Activated CD4-positive, alpha-beta T cell treated with anti-CD3 and anti-CD28 coated beads for 36 hours (primary cell): ENCODE measurements at regions of chr19 and their contacts with region 1.

Region 1: DNA sequence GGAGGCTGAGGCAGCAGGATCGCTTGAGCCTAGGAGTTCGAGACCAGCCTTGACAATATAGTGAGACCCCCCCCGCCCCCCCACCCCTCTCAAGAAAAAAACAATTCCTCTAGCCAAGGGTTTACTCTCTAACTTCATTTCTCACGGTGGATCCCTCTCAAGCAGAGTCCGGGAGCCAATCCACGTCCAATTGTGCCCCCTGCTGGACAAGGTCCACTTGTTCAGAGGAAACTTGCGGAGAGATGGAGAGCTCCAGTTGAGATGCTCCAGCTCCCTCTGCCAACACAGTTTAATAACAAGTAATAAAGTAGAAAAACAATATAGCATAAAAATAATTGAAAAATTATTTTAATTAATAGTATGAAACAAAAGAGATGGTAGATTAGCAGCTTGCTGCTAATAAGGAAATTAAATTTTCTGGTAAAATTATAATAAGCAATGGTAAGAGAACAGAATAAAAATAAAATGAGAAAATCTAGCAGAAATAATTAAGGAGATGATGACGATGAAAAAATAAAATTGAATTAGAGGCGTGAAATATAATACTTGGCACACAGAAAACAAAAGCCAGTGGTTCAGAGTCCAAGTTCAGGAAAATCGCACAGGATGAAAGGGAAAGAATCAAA is 14.5 kb upstream of the SIGLEC14 start:
- DNase-seq: peak; percentile 86
- ATAC-seq: peak; percentile 66
- H3K4me3 Mint-ChIP-seq: no peak overlapping the region
- H3K27ac Mint-ChIP-seq: no peak overlapping the region
- H3K4me1 Mint-ChIP-seq: peaks cover 5% of the 10 kb centered on the region
- H3K27me3 Mint-ChIP-seq: peaks cover 28% of the 10 kb centered on the region

Region 2: DNA sequence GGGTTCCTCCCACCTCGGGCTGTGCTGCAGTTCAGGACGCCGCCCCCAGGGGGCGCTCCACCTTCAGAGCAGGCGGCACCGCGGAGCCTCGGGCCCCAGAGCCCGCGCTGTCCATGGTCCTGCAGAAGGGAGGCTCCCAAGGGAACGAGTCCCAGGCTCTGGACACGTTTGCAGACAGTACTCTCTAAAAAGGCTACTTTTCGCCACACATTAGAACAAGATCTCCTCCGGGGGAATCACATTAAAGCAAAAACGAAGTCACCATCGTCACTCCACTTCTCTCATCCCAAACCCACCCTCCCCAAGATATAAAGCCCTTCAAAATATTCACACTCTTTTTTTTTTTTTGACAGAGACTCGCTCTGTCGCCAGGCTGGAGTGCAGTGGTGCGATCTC is 239.0 kb before region 1 on chr19:
- CTCF ChIA-PET with region 1: interaction called, 17 read pairs
- POLR2A ChIA-PET with region 1: no interaction called
- intact Hi-C with region 1: loop called (anchors 1 kb)
- DNase-seq: peak; percentile 94
- ATAC-seq: peak; percentile 60
- H3K4me3 Mint-ChIP-seq: no peak overlapping the region
- H3K27ac Mint-ChIP-seq: no peak overlapping the region
- H3K4me1 Mint-ChIP-seq: peaks cover 24% of the 10 kb centered on the region
- H3K27me3 Mint-ChIP-seq: peaks cover 20% of the 10 kb centered on the region

Region 3: GRCh38 chr19:51514866-51515481 is 146.1 kb before region 1 on chr19:
- CTCF ChIA-PET with region 1: interaction called, 28 read pairs
- POLR2A ChIA-PET with region 1: no interaction called
- intact Hi-C with region 1: loop called (anchors 2 to 5 kb)
- DNase-seq: peak; percentile 41
- ATAC-seq: peak; percentile 73
- H3K4me3 Mint-ChIP-seq: no peak overlapping the region
- H3K27ac Mint-ChIP-seq: no peak overlapping the region
- H3K4me1 Mint-ChIP-seq: peaks cover 19% of the 10 kb centered on the region
- H3K27me3 Mint-ChIP-seq: peaks cover 17% of the 10 kb centered on the region

Region 4: DNA sequence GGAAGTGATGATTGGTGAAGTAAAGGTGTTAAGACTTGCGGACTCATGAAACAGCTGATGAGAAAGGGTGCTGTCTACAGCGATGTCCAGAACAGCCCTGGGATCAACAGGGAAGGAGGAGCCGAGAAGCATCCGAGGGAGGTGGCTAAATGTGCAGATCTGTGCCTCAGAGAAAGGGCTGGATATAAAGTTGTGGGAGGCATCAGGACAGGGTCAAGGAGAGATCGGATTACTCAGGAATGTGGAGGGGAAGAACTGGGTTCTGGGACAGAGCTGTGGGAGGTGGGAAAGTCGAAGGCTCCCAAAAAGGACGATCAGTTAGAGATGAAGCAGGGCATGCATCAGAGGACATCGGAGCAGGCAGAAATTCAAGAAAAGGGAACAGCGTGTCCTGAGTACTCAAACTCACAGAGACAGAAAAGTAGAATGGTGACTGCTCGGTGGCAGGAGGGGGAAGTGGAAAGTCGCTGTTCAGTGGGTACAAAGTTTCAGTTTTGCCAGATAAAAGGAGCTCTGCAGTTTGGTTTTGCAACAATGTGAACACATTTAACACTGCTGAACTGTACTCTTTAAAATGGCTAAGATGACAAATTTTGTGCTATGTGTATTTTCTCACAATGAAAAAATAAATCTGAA is 16.3 kb before region 1 on chr19:
- CTCF ChIA-PET with region 1: interaction called, 15 read pairs
- POLR2A ChIA-PET with region 1: interaction called, 9 read pairs
- intact Hi-C with region 1: no loop called
- DNase-seq: no peak
- ATAC-seq: no peak
- H3K4me3 Mint-ChIP-seq: no peak overlapping the region
- H3K27ac Mint-ChIP-seq: no peak overlapping the region
- H3K4me1 Mint-ChIP-seq: no peaks in the 10 kb centered on the region
- H3K27me3 Mint-ChIP-seq: peaks cover 37% of the 10 kb centered on the region

Region 5: GRCh38 chr19:51777570-51778462 is 116.7 kb after region 1 on chr19:
- CTCF ChIA-PET with region 1: interaction called, 5 read pairs
- POLR2A ChIA-PET with region 1: no interaction called
- intact Hi-C with region 1: loop called in 1 of 2 experiments (anchors 10 kb)
- DNase-seq: peak; percentile 66
- ATAC-seq: peak; percentile 74
- H3K4me3 Mint-ChIP-seq: no peak overlapping the region
- H3K27ac Mint-ChIP-seq: no peak overlapping the region
- H3K4me1 Mint-ChIP-seq: peaks cover 6% of the 10 kb centered on the region
- H3K27me3 Mint-ChIP-seq: peaks cover 57% of the 10 kb centered on the region

Region 6: DNA sequence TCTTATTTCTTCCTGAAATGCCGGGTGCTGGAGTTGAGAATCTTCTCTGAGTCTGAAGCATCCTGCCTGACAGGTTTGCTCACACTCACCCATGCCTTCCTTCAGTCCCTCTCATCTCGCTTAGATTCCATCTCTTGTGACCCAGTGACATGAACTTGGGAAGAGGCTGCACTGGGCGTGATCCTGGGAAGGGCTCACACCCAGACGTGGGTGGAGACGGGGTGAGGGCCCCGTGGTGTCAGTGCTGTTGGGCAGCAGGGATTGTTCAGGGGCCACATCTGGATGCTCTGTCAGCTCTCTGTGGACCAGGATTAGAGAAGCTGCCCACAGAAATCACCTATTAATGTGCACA is 616.5 kb after region 1 on chr19:
- CTCF ChIA-PET with region 1: no interaction called
- POLR2A ChIA-PET with region 1: no interaction called
- intact Hi-C with region 1: no loop called
- DNase-seq: no peak
- ATAC-seq: no peak
- H3K4me3 Mint-ChIP-seq: no peak overlapping the region
- H3K27ac Mint-ChIP-seq: no peak overlapping the region
- H3K4me1 Mint-ChIP-seq: peaks cover 28% of the 10 kb centered on the region
- H3K27me3 Mint-ChIP-seq: no peaks in the 10 kb centered on the region